ENCODE measurements at regions of chr5 and their contacts with region 1.

Region 1: GRCh38 chr5:81751009-81751835 is at the start of gene SSBP2:
- DNase-seq: peak; percentile 99 to 100 (median 100)
- ATAC-seq: peak; percentile 87
- H3K4me3 ChIP-seq: peak within 1 kb of the TSS; percentile 68
- H3K4me3 Mint-ChIP-seq: peak within 1 kb of the TSS; percentile 99
- H3K27ac ChIP-seq: peak within 1 kb of the TSS; percentile 66 to 79
- H3K27ac Mint-ChIP-seq: peak within 1 kb of the TSS; percentile 96
- H3K4me1 ChIP-seq: peaks cover 13% of the 10 kb centered on the region
- H3K4me1 Mint-ChIP-seq: peaks cover 44% of the 10 kb centered on the region
- H3K27me3 ChIP-seq: no peaks in the 10 kb centered on the region
- H3K27me3 Mint-ChIP-seq: no peaks in the 10 kb centered on the region
- CTCF ChIP-seq: no peak
- total RNA-seq, gene SSBP2: 33.5 to 36.3 TPM

Region 2: DNA sequence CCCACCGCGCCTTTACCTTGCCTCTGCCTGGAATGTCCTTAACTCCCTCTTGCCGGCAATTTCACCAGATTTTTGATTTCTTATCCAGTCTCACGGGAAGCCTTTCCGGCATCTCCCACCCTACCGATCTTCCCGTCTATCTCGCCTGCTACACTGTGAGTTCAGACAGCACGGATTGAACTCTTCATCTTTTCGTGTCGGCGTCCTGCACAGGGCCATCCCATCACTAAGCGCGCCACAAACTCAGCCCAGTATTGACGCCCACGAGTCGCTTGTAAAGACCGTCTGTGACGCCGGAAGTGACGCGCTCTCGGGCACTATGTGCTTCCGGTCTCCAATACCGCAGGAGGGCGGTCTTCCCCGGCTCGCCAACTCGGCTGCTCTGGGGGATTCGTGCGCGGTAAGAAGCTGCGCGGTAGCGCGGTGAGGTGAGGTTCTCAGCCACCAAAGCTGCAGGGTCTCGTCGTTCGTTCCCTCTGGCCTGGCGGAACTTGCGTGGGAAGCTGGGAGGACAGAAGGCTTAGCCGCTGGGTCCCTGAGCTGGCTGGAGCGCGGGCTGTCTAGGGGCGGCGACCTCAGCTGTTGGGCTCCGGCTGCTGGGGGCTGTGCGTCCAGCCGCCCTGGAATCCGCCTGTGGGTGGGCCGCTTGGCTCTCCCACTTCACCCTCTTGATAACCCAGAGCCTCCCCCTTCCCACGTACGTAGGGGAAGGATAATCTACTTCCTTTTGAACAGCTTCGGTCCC is 449.8 kb before region 1 on chr5 and contains the start of gene ZCCHC9:
- CTCF ChIA-PET with region 1: no interaction called
- POLR2A ChIA-PET with region 1: interaction called, 12 read pairs
- intact Hi-C with region 1: no loop called
- DNase-seq: peak; percentile 87 to 98 (median 90)
- ATAC-seq: peak; percentile 91
- H3K4me3 ChIP-seq: peak within 1 kb of the TSS; percentile 92
- H3K4me3 Mint-ChIP-seq: peak within 1 kb of the TSS; percentile 94
- H3K27ac ChIP-seq: peak within 1 kb of the TSS; percentile 84
- H3K27ac Mint-ChIP-seq: peak within 1 kb of the TSS; percentile 91
- H3K4me1 ChIP-seq: peaks cover 25% of the 10 kb centered on the region
- H3K4me1 Mint-ChIP-seq: peaks cover 60% of the 10 kb centered on the region
- H3K27me3 ChIP-seq: no peaks in the 10 kb centered on the region
- H3K27me3 Mint-ChIP-seq: no peaks in the 10 kb centered on the region
- CTCF ChIP-seq: no peak
- total RNA-seq, gene ZCCHC9: 16.3 to 17.3 TPM

Region 3: DNA sequence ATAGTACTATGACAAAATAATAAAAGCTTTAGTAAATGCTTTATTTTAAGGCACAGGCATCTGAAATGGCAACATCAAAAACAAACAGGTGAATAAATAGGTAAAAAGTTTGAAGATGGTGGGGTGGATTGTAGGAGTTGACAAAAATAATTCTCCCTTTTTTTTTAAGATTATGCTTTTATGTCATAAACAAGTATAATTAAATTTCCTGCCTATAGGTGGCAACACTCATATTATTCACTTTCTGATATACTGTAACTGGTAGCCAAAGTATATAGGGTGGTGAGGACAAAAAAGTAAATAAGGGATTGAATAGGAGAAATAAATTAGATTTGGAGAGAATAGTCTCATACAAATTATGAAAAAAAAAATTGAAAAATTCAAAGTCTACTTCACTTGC is 237.2 kb before region 1 on chr5:
- CTCF ChIA-PET with region 1: no interaction called
- POLR2A ChIA-PET with region 1: interaction called, 8 read pairs
- intact Hi-C with region 1: loop called (anchors 5 kb)
- DNase-seq: peak in 3 of 14 experiments; percentile 16 to 43 (median 22)
- ATAC-seq: peak; percentile 48
- H3K4me3 ChIP-seq: no peak overlapping the region
- H3K4me3 Mint-ChIP-seq: no peak overlapping the region
- H3K27ac ChIP-seq: no peak overlapping the region
- H3K27ac Mint-ChIP-seq: no peak overlapping the region
- H3K4me1 ChIP-seq: no peaks in the 10 kb centered on the region
- H3K4me1 Mint-ChIP-seq: peaks cover 7% of the 10 kb centered on the region
- H3K27me3 ChIP-seq: no peaks in the 10 kb centered on the region
- H3K27me3 Mint-ChIP-seq: no peaks in the 10 kb centered on the region
- CTCF ChIP-seq: peak; percentile 61

Region 4: DNA sequence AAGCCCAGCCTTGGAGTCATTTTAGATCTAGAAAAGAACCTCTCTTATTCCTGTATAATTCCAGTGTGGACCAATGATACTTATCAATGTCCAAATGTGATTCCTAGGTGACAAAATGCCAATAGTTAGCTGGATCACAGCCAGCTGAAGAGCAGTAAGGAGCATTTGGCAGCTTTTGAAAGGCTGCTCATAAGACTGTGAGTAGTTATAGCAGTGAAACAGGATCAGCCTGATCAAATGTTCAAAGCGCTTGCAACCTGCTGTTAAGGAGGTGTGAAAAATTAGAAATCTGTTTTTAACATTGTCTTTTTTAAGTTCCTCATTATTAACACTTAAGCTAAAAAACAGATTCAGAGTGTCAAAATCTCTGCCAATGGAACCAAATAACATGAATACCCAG is 85.4 kb before region 1 on chr5:
- CTCF ChIA-PET with region 1: no interaction called
- POLR2A ChIA-PET with region 1: no interaction called
- intact Hi-C with region 1: no loop called
- DNase-seq: no peak
- ATAC-seq: no peak
- H3K4me3 ChIP-seq: no peak overlapping the region
- H3K4me3 Mint-ChIP-seq: no peak overlapping the region
- H3K27ac ChIP-seq: no peak overlapping the region
- H3K27ac Mint-ChIP-seq: no peak overlapping the region
- H3K4me1 ChIP-seq: no peaks in the 10 kb centered on the region
- H3K4me1 Mint-ChIP-seq: peaks cover 62% of the 10 kb centered on the region
- H3K27me3 ChIP-seq: no peaks in the 10 kb centered on the region
- H3K27me3 Mint-ChIP-seq: no peaks in the 10 kb centered on the region
- CTCF ChIP-seq: no peak

Region 5: GRCh38 chr5:81718300-81718699 is 32.9 kb before region 1 on chr5:
- CTCF ChIA-PET with region 1: no interaction called
- POLR2A ChIA-PET with region 1: interaction called, 22 read pairs
- intact Hi-C with region 1: no loop called
- DNase-seq: peak in 1 of 14 experiments; percentile 8
- ATAC-seq: no peak
- H3K4me3 ChIP-seq: no peak overlapping the region
- H3K4me3 Mint-ChIP-seq: peak overlapping the region; percentile 9
- H3K27ac ChIP-seq: no peak overlapping the region
- H3K27ac Mint-ChIP-seq: peak overlapping the region; percentile 24
- H3K4me1 ChIP-seq: peaks cover 10% of the 10 kb centered on the region
- H3K4me1 Mint-ChIP-seq: peaks cover 94% of the 10 kb centered on the region
- H3K27me3 ChIP-seq: no peaks in the 10 kb centered on the region
- H3K27me3 Mint-ChIP-seq: no peaks in the 10 kb centered on the region
- CTCF ChIP-seq: no peak

Region 6: DNA sequence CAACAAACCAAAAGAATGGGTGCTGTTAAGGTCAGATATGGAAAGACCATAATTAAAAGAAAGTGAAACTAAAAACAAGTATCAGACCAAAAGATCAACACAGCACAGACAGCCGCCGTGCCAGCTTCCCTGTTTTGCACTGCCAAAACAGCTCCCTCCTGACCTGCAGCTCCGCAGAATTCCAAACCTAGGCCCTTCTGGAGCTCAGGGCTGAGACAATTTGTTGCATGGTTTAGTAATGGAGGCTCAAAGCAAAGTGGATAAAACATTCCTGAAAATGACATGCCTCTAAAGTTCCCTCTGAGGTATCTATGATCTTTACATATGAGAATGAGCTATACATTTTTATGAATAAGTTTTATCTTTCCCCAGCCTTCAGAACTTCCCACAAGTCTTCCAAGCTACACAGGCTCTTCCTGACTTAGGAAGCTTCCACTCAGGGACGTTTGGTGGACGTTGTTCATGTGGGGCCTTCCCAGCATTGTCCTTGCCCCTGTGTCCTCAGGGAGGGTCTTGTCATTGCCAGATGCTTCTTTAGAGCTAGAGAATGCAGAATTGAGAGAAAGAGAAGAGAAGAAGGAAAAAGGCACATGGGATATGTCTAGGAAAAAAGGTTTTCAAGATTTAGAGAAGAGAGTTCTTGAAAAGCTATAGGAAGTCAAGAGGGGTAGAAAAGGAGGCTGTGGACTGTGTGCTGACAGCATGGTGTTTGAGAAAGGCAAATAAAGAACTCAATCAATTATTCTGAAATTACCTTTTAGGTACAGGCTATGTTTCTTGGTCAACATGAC is 28.1 kb after region 1 on chr5:
- CTCF ChIA-PET with region 1: no interaction called
- POLR2A ChIA-PET with region 1: interaction called, 47 read pairs
- intact Hi-C with region 1: no loop called
- DNase-seq: peak; percentile 4 to 67 (median 30)
- ATAC-seq: peak; percentile 68
- H3K4me3 ChIP-seq: peak overlapping the region; percentile 42
- H3K4me3 Mint-ChIP-seq: peak overlapping the region; percentile 90
- H3K27ac ChIP-seq: peak overlapping the region; percentile 65 to 70
- H3K27ac Mint-ChIP-seq: peak overlapping the region; percentile 95
- H3K4me1 ChIP-seq: peaks cover 18% of the 10 kb centered on the region
- H3K4me1 Mint-ChIP-seq: peaks cover 35% of the 10 kb centered on the region
- H3K27me3 ChIP-seq: no peaks in the 10 kb centered on the region
- H3K27me3 Mint-ChIP-seq: no peaks in the 10 kb centered on the region
- CTCF ChIP-seq: no peak

Region 7: GRCh38 chr5:81851481-81852178 is 100.4 kb after region 1 on chr5:
- CTCF ChIA-PET with region 1: interaction called, 11 read pairs
- POLR2A ChIA-PET with region 1: interaction called, 383 read pairs
- intact Hi-C with region 1: loop called (anchors 1 kb)
- DNase-seq: peak; percentile 81 to 95 (median 90)
- ATAC-seq: peak; percentile 86
- H3K4me3 ChIP-seq: peak overlapping the region; percentile 65
- H3K4me3 Mint-ChIP-seq: peak overlapping the region; percentile 97
- H3K27ac ChIP-seq: peak overlapping the region; percentile 51 to 66
- H3K27ac Mint-ChIP-seq: peak overlapping the region; percentile 96
- H3K4me1 ChIP-seq: peaks cover 32% of the 10 kb centered on the region
- H3K4me1 Mint-ChIP-seq: peaks cover 56% of the 10 kb centered on the region
- H3K27me3 ChIP-seq: no peaks in the 10 kb centered on the region
- H3K27me3 Mint-ChIP-seq: no peaks in the 10 kb centered on the region
- CTCF ChIP-seq: no peak

Region 8: DNA sequence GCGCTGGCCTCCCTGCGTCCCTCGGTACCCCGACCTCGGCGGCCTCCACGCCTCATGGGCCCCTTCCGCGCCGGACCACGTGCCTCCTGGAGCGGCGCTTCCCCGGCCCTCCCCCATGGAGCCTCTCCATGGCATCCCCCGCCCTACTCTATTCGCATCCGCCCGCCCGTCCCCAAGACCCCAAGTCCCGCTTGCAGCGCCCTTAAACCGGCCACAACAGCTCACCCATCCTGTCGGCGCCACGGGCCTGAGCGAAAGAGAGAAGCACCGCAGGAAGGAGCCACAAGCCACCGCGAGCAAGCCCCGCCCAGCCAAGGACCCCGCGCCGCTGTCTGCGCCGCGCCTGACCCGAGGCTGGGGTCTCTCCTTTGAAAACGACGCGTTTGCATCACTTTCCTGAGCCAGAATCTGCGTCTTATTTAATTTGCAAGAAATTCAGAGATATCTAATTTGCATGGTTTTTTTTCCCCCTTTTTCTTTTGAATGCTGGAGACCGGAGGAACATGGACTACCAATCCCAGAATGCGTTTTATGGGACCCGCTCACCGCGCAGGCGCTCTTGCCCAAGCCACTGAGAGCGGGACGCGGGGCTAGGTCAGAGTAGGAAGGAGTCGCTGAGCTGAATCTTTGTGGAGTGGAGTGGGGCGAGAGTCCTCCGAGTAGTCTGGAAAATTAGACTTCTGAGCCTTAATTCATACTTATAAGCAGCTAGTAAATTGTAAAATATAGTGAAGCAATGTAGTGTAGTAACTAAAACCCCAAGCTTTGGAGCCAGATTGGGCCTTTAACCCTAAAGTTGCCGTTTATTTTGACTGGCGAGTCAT is 527.1 kb after region 1 on chr5 and contains the start of gene RPS23:
- CTCF ChIA-PET with region 1: no interaction called
- POLR2A ChIA-PET with region 1: interaction called, 12 read pairs
- intact Hi-C with region 1: loop called in 1 of 2 experiments (anchors 10 kb)
- DNase-seq: peak; percentile 77 to 93 (median 84)
- ATAC-seq: peak; percentile 92
- H3K4me3 ChIP-seq: peak within 1 kb of the TSS; percentile 78
- H3K4me3 Mint-ChIP-seq: peak within 1 kb of the TSS; percentile 94
- H3K27ac ChIP-seq: peak within 1 kb of the TSS; percentile 62 to 63
- H3K27ac Mint-ChIP-seq: peak within 1 kb of the TSS; percentile 94
- H3K4me1 ChIP-seq: peaks cover 18% of the 10 kb centered on the region
- H3K4me1 Mint-ChIP-seq: peaks cover 29% of the 10 kb centered on the region
- H3K27me3 ChIP-seq: no peaks in the 10 kb centered on the region
- H3K27me3 Mint-ChIP-seq: no peaks in the 10 kb centered on the region
- CTCF ChIP-seq: no peak
- total RNA-seq, gene RPS23: 4,190 to 4,212 TPM

Measured in CD4-positive, alpha-beta T cell (primary cell).